ENCODE measurements at regions of chr17 and their contacts with region 1.

Region 1: GRCh38 chr17:64025732-64026294 is 5.4 kb upstream of the ICAM2 start:
- DNase-seq: peak; percentile 18
- H3K4me3 ChIP-seq: peak overlapping the region in 2 of 4 donors; percentile 21 to 50
- H3K27ac ChIP-seq: peak overlapping the region in 3 of 4 donors; percentile 10 to 52 (median 48)
- H3K4me1 ChIP-seq: peaks cover 0 to 20% (median 4%) of the 10 kb centered on the region in 3 donors
- H3K27me3 ChIP-seq: no peaks in the 10 kb centered on the region
- CTCF ChIP-seq: peak; percentile 86 to 98 (median 90)
- POLR2A ChIP-seq: no peak

Region 2: GRCh38 chr17:63929860-63930766 is 95.7 kb before region 1 on chr17:
- intact Hi-C with region 1: loop called (anchors 10 kb)
- DNase-seq: no peak
- H3K4me3 ChIP-seq: peak overlapping the region in 2 of 4 donors; percentile 14 to 53
- H3K27ac ChIP-seq: peak overlapping the region in 3 of 4 donors; percentile 33 to 74 (median 70)
- H3K4me1 ChIP-seq: peaks cover 5 to 30% (median 5%) of the 10 kb centered on the region in 3 donors
- H3K27me3 ChIP-seq: peaks cover 0 to 5% (median 0%) of the 10 kb centered on the region in 4 donors
- CTCF ChIP-seq: no peak
- POLR2A ChIP-seq: no peak

Measured in esophagus squamous epithelium (tissue), 5 donors.